ENCODE measurements at regions of chr2 and their contacts with region 1.

Region 1: GRCh38 chr2:160252278-160252887 is 52.3 kb upstream of the ITGB6 start:
- DNase-seq: no peak
- ATAC-seq: peak; percentile 45 to 56

Region 2: GRCh38 chr2:160994141-160995002 is 742.0 kb after region 1 on chr2:
- intact Hi-C with region 1: loop called in 1 of 2 experiments (anchors 10 kb)
- DNase-seq: peak; percentile 41
- ATAC-seq: peak; percentile 88 to 91

Measured in left cardiac atrium (tissue), 4 donors.